ENCODE measurements at regions of chr4 and their contacts with region 1.

Region 1: DNA sequence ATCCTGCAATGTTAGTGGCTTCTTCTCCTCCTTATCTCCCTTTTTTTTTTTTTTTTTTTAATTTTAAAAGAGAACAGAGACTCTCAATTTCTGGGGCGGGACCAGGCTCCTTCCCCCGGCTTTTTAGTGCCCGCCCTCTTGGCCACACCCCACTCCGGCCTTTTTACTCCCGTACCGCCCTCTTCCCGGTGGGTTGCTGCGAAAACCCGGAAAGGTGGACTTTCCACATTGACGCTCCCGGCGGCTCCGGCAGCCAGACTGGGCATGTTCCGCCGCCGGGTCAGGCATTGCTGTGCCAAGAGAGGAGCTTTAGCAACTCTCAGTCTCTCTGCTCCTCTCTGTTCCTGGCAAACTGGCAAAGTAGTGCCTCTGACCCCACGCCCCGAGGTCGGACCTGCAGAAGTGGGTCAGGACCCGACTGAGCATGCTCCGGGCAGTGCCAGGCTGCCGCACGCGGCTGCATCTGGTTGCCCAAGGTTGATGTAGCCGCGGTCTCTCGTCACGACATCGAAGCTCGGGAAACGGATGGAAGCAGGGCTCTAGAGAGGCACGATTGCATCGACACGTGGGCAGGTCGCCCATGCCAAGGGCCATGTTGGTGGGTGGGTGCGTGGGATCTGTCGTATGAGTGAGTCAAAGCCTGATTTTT is 1.1 kb upstream of the MFAP3L start:
- DNase-seq: peak; percentile 93
- H3K4me3 Mint-ChIP-seq: peak overlapping the region; percentile 83
- H3K27ac Mint-ChIP-seq: peak overlapping the region; percentile 38
- H3K4me1 Mint-ChIP-seq: peaks cover 7% of the 10 kb centered on the region
- H3K27me3 Mint-ChIP-seq: peaks cover 15% of the 10 kb centered on the region

Region 2: GRCh38 chr4:169311643-169312365 is 715.5 kb before region 1 on chr4:
- CTCF ChIA-PET with region 1: no interaction called
- intact Hi-C with region 1: no loop called
- DNase-seq: no peak
- H3K4me3 Mint-ChIP-seq: no peak overlapping the region
- H3K27ac Mint-ChIP-seq: no peak overlapping the region
- H3K4me1 Mint-ChIP-seq: no peaks in the 10 kb centered on the region
- H3K27me3 Mint-ChIP-seq: peaks cover 8% of the 10 kb centered on the region

Region 3: GRCh38 chr4:169791527-169792156 is 235.7 kb before region 1 on chr4:
- CTCF ChIA-PET with region 1: interaction called, 3 read pairs
- intact Hi-C with region 1: loop called (anchors 5 kb)
- DNase-seq: peak; percentile 49
- H3K4me3 Mint-ChIP-seq: peak overlapping the region; percentile 47
- H3K27ac Mint-ChIP-seq: no peak overlapping the region
- H3K4me1 Mint-ChIP-seq: peaks cover 12% of the 10 kb centered on the region
- H3K27me3 Mint-ChIP-seq: peaks cover 43% of the 10 kb centered on the region

Region 4: GRCh38 chr4:170058826-170059225 is 31.5 kb after region 1 on chr4:
- CTCF ChIA-PET with region 1: no interaction called
- intact Hi-C with region 1: no loop called
- DNase-seq: no peak
- H3K4me3 Mint-ChIP-seq: no peak overlapping the region
- H3K27ac Mint-ChIP-seq: no peak overlapping the region
- H3K4me1 Mint-ChIP-seq: no peaks in the 10 kb centered on the region
- H3K27me3 Mint-ChIP-seq: peaks cover 2% of the 10 kb centered on the region

Measured in activated naive CD4-positive, alpha-beta T cell treated with anti-CD3 and anti-CD28 coated beads for 36 hours (primary cell).